ENCODE measurements at regions of chr14 and their contacts with region 1.

Region 1: GRCh38 chr14:102304611-102305509 is at the start of gene MOK:
- DNase-seq: peak; percentile 98
- H3K4me3 Mint-ChIP-seq: peak within 1 kb of the TSS; percentile 95
- H3K27ac Mint-ChIP-seq: peak within 1 kb of the TSS; percentile 91
- H3K4me1 Mint-ChIP-seq: peaks cover 9% of the 10 kb centered on the region
- H3K27me3 Mint-ChIP-seq: no peaks in the 10 kb centered on the region
- total RNA-seq, gene MOK: 2.7 TPM

Region 2: DNA sequence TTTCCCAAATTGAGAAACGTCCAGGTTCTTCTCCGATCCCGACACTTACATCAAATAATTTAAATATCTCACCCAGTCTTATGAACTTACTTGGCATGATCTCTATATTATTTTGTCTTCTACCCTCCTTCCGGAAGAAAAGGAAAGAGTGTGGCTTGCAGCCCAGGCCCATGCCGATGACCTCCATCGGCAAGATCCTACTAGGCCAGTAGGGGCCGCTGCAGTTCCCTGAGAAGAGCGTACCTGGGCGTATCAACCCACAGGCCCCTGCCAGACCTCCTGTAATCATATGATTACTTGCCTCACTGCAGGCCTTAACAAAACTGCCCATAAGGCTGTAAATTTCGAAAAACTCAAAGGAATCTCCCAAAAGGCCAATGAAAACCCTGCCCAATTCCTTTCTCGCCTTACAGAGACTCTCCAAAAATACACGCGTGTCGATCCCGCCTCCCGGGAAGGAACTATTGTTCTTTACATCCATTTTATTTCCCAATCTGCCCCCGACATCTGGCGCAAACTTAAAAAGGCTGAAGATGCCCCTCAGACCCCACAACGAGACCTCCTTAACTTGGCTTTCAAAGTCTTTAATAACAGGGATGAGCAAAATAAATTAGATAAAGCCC is 69.5 kb before region 1 on chr14:
- CTCF ChIA-PET with region 1: interaction called, 5 read pairs
- POLR2A ChIA-PET with region 1: no interaction called
- intact Hi-C with region 1: loop called (anchors 2 kb)
- DNase-seq: peak; percentile 87
- H3K4me3 Mint-ChIP-seq: no peak overlapping the region
- H3K27ac Mint-ChIP-seq: no peak overlapping the region
- H3K4me1 Mint-ChIP-seq: no peaks in the 10 kb centered on the region
- H3K27me3 Mint-ChIP-seq: no peaks in the 10 kb centered on the region

Measured in activated CD4-positive, alpha-beta memory T cell treated with anti-CD3 and anti-CD28 coated beads for 36 hours (primary cell).